Spleen (tissue), 13 donors: ENCODE measurements at regions of chr9 and their contacts with region 1.

Region 1: DNA sequence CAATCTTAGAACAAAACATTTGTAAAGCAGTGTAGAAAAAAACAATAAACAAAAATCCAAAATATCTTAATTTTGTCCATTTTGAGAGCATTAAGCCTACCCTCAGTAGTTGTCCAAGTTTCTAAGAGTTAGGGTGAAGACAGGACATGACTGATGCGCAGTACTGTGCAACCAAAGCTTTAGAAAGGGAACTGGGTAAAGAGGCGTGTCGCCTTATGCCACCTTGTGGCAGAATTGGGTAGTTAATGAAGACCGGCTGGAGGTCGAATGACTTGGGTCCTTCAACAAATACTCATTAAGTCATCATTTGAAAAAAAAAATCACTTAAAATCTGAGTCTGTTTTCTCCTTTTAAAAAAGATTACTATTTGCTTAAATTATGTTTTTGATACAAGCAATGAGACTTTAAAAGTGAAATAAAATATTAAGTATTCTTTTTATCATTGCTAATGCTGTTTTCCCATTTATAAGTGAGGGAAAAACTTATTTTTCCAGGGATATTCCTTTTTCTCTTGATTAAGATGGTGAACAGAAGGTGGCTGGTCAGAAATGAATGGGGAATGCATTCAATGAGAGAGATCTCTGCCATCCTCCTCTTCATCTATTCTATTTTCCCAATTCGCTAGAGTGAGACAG is 3.5 kb upstream of the RNF20 start:
- DNase-seq: no peak
- H3K4me3 ChIP-seq: no peak overlapping the region
- H3K27ac ChIP-seq: no peak overlapping the region
- H3K4me1 ChIP-seq: peaks cover 5 to 25% (median 16%) of the 10 kb centered on the region in 6 donors
- H3K27me3 ChIP-seq: peaks cover 0 to 7% (median 0%) of the 10 kb centered on the region in 7 donors
- CTCF ChIP-seq: peak; percentile 71 to 92 (median 84)
- POLR2A ChIP-seq: no peak

Region 2: GRCh38 chr9:101398068-101398929 is 131.9 kb before region 1 on chr9 and contains the starts of genes MRPL50 and ZNF189:
- intact Hi-C with region 1: loop called (anchors 5 kb)
- DNase-seq: peak; percentile 100
- H3K4me3 ChIP-seq: peak within 1 kb of the TSS; percentile 51 to 82 (median 66)
- H3K27ac ChIP-seq: peak within 1 kb of the TSS; percentile 78 to 95 (median 88)
- H3K4me1 ChIP-seq: peaks cover 21 to 71% (median 54%) of the 10 kb centered on the region in 6 donors
- H3K27me3 ChIP-seq: no peaks in the 10 kb centered on the region
- CTCF ChIP-seq: peak in 2 of 11 experiments; percentile 17 to 30
- POLR2A ChIP-seq: peak in 2 of 3 donors; percentile 27 to 59
- total RNA-seq, gene MRPL50: 10.2 to 15.5 (median 11.6) TPM
- total RNA-seq, gene ZNF189: 20.0 to 39.0 (median 27.7) TPM

Region 3: GRCh38 chr9:101458955-101459631 is 71.1 kb before region 1 on chr9:
- intact Hi-C with region 1: loop called (anchors 5 kb)
- DNase-seq: no peak
- H3K4me3 ChIP-seq: no peak overlapping the region
- H3K27ac ChIP-seq: no peak overlapping the region
- H3K4me1 ChIP-seq: no peaks in the 10 kb centered on the region
- H3K27me3 ChIP-seq: peaks cover 0 to 16% (median 0%) of the 10 kb centered on the region in 7 donors
- CTCF ChIP-seq: peak in 9 of 11 experiments; percentile 10 to 67 (median 53)
- POLR2A ChIP-seq: no peak